Activated B cell treated with CpG ODN at 0.5 μM for 24 hours (primary cell): ENCODE measurements at regions of chr1 and their contacts with region 1.

Region 1: GRCh38 chr1:246608616-246609376 is 42.5 kb downstream of the CNST start:
- DNase-seq: no peak
- ATAC-seq: peak; percentile 34
- H3K4me3 Mint-ChIP-seq: no peak overlapping the region
- H3K27ac Mint-ChIP-seq: peak overlapping the region; percentile 25
- H3K4me1 Mint-ChIP-seq: peaks cover 40% of the 10 kb centered on the region
- H3K27me3 Mint-ChIP-seq: no peaks in the 10 kb centered on the region
- CTCF ChIP-seq: no peak

Region 2: GRCh38 chr1:245166471-245166885 is 1442.3 kb before region 1 on chr1:
- CTCF ChIA-PET with region 1: no interaction called
- POLR2A ChIA-PET with region 1: no interaction called
- intact Hi-C with region 1: loop called (anchors 5 kb)
- DNase-seq: no peak
- ATAC-seq: no peak
- H3K4me3 Mint-ChIP-seq: no peak overlapping the region
- H3K27ac Mint-ChIP-seq: no peak overlapping the region
- H3K4me1 Mint-ChIP-seq: no peaks in the 10 kb centered on the region
- H3K27me3 Mint-ChIP-seq: peaks cover 40% of the 10 kb centered on the region
- CTCF ChIP-seq: no peak

Region 3: GRCh38 chr1:246632281-246633087 is 23.7 kb after region 1 on chr1:
- CTCF ChIA-PET with region 1: no interaction called
- POLR2A ChIA-PET with region 1: no interaction called
- intact Hi-C with region 1: loop called (anchors 1 kb)
- DNase-seq: no peak
- ATAC-seq: no peak
- H3K4me3 Mint-ChIP-seq: no peak overlapping the region
- H3K27ac Mint-ChIP-seq: no peak overlapping the region
- H3K4me1 Mint-ChIP-seq: peaks cover 10% of the 10 kb centered on the region
- H3K27me3 Mint-ChIP-seq: no peaks in the 10 kb centered on the region
- CTCF ChIP-seq: no peak

Region 4: GRCh38 chr1:247204177-247204647 is 595.4 kb after region 1 on chr1:
- CTCF ChIA-PET with region 1: no interaction called
- POLR2A ChIA-PET with region 1: no interaction called
- intact Hi-C with region 1: no loop called
- DNase-seq: no peak
- ATAC-seq: no peak
- H3K4me3 Mint-ChIP-seq: no peak overlapping the region
- H3K27ac Mint-ChIP-seq: no peak overlapping the region
- H3K4me1 Mint-ChIP-seq: peaks cover 54% of the 10 kb centered on the region
- H3K27me3 Mint-ChIP-seq: no peaks in the 10 kb centered on the region
- CTCF ChIP-seq: no peak